Panc1 (cell line): ENCODE measurements at regions of chr17 and their contacts with region 1.

Region 1: GRCh38 chr17:78993981-78994671 is 14.4 kb upstream of the LGALS3BP start:
- DNase-seq: no peak
- ATAC-seq: peak; percentile 22; the same call in 1 of the 2 replicates
- H3K4me3 ChIP-seq: no peak overlapping the region
- H3K27ac ChIP-seq: no peak overlapping the region
- H3K4me1 ChIP-seq: no peaks in the 10 kb centered on the region
- H3K27me3 ChIP-seq: no peaks in the 10 kb centered on the region
- CTCF ChIP-seq: no peak

Region 2: GRCh38 chr17:78781948-78782916 is 211.9 kb before region 1 on chr17 and contains the start of gene CYTH1:
- CTCF ChIA-PET with region 1: no interaction called
- POLR2A ChIA-PET with region 1: no interaction called
- in situ Hi-C with region 1: no loop called
- intact Hi-C with region 1: no loop called
- DNase-seq: peak; percentile 35
- ATAC-seq: peak; percentile 85
- H3K4me3 ChIP-seq: peak within 1 kb of the TSS; percentile 69 to 77
- H3K27ac ChIP-seq: peak within 1 kb of the TSS; percentile 95
- H3K4me1 ChIP-seq: peaks cover 12% of the 10 kb centered on the region
- H3K27me3 ChIP-seq: no peaks in the 10 kb centered on the region
- CTCF ChIP-seq: no peak
- total RNA-seq, gene CYTH1: 46.7 TPM

Region 3: GRCh38 chr17:78794864-78795640 is 199.1 kb before region 1 on chr17:
- CTCF ChIA-PET with region 1: interaction called, 14 read pairs
- POLR2A ChIA-PET with region 1: no interaction called
- in situ Hi-C with region 1: no loop called
- intact Hi-C with region 1: no loop called
- DNase-seq: no peak
- ATAC-seq: no peak
- H3K4me3 ChIP-seq: no peak overlapping the region
- H3K27ac ChIP-seq: no peak overlapping the region
- H3K4me1 ChIP-seq: no peaks in the 10 kb centered on the region
- H3K27me3 ChIP-seq: no peaks in the 10 kb centered on the region
- CTCF ChIP-seq: no peak